GM10248 (cell line): ENCODE measurements at regions of chr5 and their contacts with region 1.

Region 1: DNA sequence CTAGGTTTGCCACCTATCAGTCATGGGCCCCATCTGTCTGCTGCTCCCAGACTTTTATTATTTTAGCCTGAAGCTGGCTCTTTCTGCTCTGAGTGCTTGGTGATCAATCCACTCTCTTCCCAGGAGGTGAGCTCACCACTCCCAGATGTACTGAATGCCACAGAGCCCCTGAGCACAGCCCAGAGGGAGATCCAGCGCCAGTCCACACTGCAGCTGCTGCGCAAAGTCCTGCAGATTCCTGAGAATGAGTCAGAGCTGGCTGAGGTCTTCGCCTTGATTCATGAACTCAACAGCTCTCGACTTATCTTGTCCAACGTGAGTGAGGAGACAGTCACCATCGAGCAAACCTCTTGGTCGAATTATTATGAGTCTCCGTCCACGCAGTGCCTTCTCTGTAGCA is 36.0 kb downstream of the HMGXB3 start:
- DNase-seq: no peak
- CTCF ChIP-seq: no peak

Region 2: GRCh38 chr5:150022163-150022540 is 14.4 kb before region 1 on chr5:
- CTCF ChIA-PET with region 1: interaction called, 16 read pairs
- POLR2A ChIA-PET with region 1: no interaction called
- DNase-seq: no peak
- CTCF ChIP-seq: no peak

Region 3: GRCh38 chr5:150052956-150053712 is 16.6 kb after region 1 on chr5:
- CTCF ChIA-PET with region 1: interaction called, 21 read pairs
- POLR2A ChIA-PET with region 1: no interaction called
- DNase-seq: no peak
- CTCF ChIP-seq: no peak

Region 4: GRCh38 chr5:150112261-150113046 is 75.9 kb after region 1 on chr5:
- CTCF ChIA-PET with region 1: no interaction called
- POLR2A ChIA-PET with region 1: no interaction called
- DNase-seq: no peak
- CTCF ChIP-seq: no peak

Region 5: GRCh38 chr5:150180241-150181026 is 143.9 kb after region 1 on chr5:
- CTCF ChIA-PET with region 1: no interaction called
- POLR2A ChIA-PET with region 1: no interaction called
- DNase-seq: no peak
- CTCF ChIP-seq: no peak